ENCODE measurements at regions of chr4 and their contacts with region 1.

Region 1: DNA sequence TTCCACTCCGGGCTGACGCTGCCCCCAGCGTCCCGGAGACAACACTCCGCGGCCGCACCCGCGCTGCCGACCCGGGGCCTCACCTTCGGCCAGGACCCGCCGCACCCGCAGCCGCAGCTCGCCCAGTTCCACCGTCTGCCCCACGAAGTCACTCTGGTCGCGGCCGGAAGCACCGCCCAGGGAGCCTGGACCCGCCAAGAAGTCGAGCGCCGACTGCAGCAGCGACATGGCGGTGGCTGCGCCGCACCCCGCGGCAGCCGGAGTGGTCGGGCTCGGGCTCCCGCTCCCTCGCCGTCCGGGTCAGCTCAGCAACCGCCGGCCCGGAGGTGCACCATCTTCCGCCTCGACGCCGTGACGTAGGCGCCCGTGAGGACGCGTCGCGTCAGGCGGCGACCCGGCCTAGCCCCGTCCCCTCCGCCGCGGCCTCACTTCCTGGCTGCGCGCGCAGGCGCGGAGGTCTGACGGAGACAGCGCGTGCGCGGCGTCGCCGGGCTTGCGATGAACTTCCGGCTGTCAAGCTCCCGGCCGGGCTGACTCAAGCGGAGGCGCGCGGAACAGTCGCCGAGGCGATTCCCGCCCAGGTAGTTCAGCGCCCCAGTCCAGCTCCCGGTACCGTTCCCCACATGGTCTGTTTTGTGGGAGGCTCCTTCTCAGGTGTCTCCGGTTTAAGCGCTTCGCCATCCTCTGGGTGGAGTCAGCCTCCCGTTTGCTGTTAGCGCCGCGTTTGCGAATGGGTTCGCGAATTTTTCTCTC is at the starts of genes GAK and TMEM175:
- DNase-seq: peak; percentile 93 to 99 (median 98)
- ATAC-seq: peak; percentile 95
- H3K4me3 ChIP-seq: peak within 1 kb of the TSS; percentile 83
- H3K4me3 Mint-ChIP-seq: peak within 1 kb of the TSS; percentile 89 to 99 (median 95)
- H3K27ac ChIP-seq: peak within 1 kb of the TSS; percentile 99
- H3K27ac Mint-ChIP-seq: peak within 1 kb of the TSS; percentile 92 to 97 (median 96)
- H3K4me1 ChIP-seq: peaks cover 24 to 35% of the 10 kb centered on the region in 2 donors
- H3K4me1 Mint-ChIP-seq: peaks cover 35 to 59% (median 48%) of the 10 kb centered on the region in 7 donors
- H3K27me3 ChIP-seq: no peaks in the 10 kb centered on the region
- H3K27me3 Mint-ChIP-seq: no peaks in the 10 kb centered on the region
- total RNA-seq, gene GAK: 167 to 206 (median 174) TPM
- total RNA-seq, gene TMEM175: 28.9 to 69.9 (median 64.9) TPM

Region 2: GRCh38 chr4:674172-675035 is 257.7 kb before region 1 on chr4 and contains the starts of genes ATP5ME and MYL5:
- CTCF ChIA-PET with region 1: no interaction called
- POLR2A ChIA-PET with region 1: no interaction called
- intact Hi-C with region 1: loop called (anchors 1 to 2 kb)
- DNase-seq: peak; percentile 97 to 100 (median 99)
- ATAC-seq: peak; percentile 96
- H3K4me3 ChIP-seq: peak within 1 kb of the TSS; percentile 88
- H3K4me3 Mint-ChIP-seq: peak within 1 kb of the TSS; percentile 84 to 92 (median 88)
- H3K27ac ChIP-seq: peak within 1 kb of the TSS; percentile 100
- H3K27ac Mint-ChIP-seq: peak within 1 kb of the TSS; percentile 80 to 91 (median 89)
- H3K4me1 ChIP-seq: peaks cover 7 to 16% of the 10 kb centered on the region in 2 donors
- H3K4me1 Mint-ChIP-seq: peaks cover 7 to 15% (median 8%) of the 10 kb centered on the region in 7 donors
- H3K27me3 ChIP-seq: no peaks in the 10 kb centered on the region
- H3K27me3 Mint-ChIP-seq: no peaks in the 10 kb centered on the region
- total RNA-seq, gene ATP5ME: 115 to 183 (median 123) TPM
- total RNA-seq, gene MYL5: 19.9 to 32.7 (median 23.8) TPM

Region 3: GRCh38 chr4:876780-877179 is 55.4 kb before region 1 on chr4:
- CTCF ChIA-PET with region 1: no interaction called
- POLR2A ChIA-PET with region 1: no interaction called
- intact Hi-C with region 1: loop called (anchors 1 kb)
- DNase-seq: no peak
- ATAC-seq: no peak
- H3K4me3 ChIP-seq: no peak overlapping the region
- H3K4me3 Mint-ChIP-seq: peak overlapping the region in 1 of 10 donors; percentile 34
- H3K27ac ChIP-seq: no peak overlapping the region
- H3K27ac Mint-ChIP-seq: peak overlapping the region in 3 of 9 donors; percentile 28 to 76 (median 38)
- H3K4me1 ChIP-seq: peaks cover 15 to 21% of the 10 kb centered on the region in 2 donors
- H3K4me1 Mint-ChIP-seq: peaks cover 22 to 35% (median 28%) of the 10 kb centered on the region in 7 donors
- H3K27me3 ChIP-seq: no peaks in the 10 kb centered on the region
- H3K27me3 Mint-ChIP-seq: no peaks in the 10 kb centered on the region

Region 4: DNA sequence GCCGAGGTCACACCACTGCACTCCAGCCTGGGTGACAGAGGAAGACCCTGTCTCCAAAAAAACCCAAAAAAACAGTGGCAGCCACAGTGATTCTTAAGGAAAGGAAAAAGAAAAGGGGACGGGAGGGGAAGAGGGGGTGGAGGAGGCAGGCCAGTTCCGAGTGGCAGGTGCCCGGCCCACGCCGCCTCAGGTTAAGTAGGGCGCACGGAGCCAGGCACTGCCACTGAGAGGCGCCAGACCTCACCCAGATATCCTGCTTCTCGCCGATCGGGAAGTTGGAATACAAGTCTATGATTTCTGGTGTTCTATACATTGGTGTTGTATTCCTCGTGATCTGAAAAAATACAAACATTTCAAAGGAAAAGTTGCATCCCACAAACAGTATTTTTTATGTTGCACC is 35.9 kb before region 1 on chr4:
- CTCF ChIA-PET with region 1: no interaction called
- POLR2A ChIA-PET with region 1: no interaction called
- intact Hi-C with region 1: no loop called
- DNase-seq: no peak
- ATAC-seq: no peak
- H3K4me3 ChIP-seq: no peak overlapping the region
- H3K4me3 Mint-ChIP-seq: no peak overlapping the region
- H3K27ac ChIP-seq: no peak overlapping the region
- H3K27ac Mint-ChIP-seq: no peak overlapping the region
- H3K4me1 ChIP-seq: no peaks in the 10 kb centered on the region
- H3K4me1 Mint-ChIP-seq: peaks cover 0 to 8% (median 0%) of the 10 kb centered on the region in 7 donors
- H3K27me3 ChIP-seq: no peaks in the 10 kb centered on the region
- H3K27me3 Mint-ChIP-seq: no peaks in the 10 kb centered on the region

Region 5: GRCh38 chr4:986879-987623 is 54.9 kb after region 1 on chr4 and contains the start of gene IDUA:
- CTCF ChIA-PET with region 1: interaction called, 4 read pairs
- POLR2A ChIA-PET with region 1: interaction called, 14 read pairs
- intact Hi-C with region 1: loop called (anchors 1 kb)
- DNase-seq: peak; percentile 75 to 90 (median 84)
- ATAC-seq: peak; percentile 93
- H3K4me3 ChIP-seq: peak within 1 kb of the TSS; percentile 82
- H3K4me3 Mint-ChIP-seq: peak within 1 kb of the TSS; percentile 87 to 95 (median 92)
- H3K27ac ChIP-seq: peak within 1 kb of the TSS; percentile 78
- H3K27ac Mint-ChIP-seq: peak within 1 kb of the TSS; percentile 76 to 90 (median 85)
- H3K4me1 ChIP-seq: peaks cover 19 to 21% of the 10 kb centered on the region in 2 donors
- H3K4me1 Mint-ChIP-seq: peaks cover 11 to 34% (median 22%) of the 10 kb centered on the region in 7 donors
- H3K27me3 ChIP-seq: no peaks in the 10 kb centered on the region
- H3K27me3 Mint-ChIP-seq: no peaks in the 10 kb centered on the region
- total RNA-seq, gene IDUA: 42.3 to 72.4 (median 65.8) TPM

Region 6: GRCh38 chr4:1041147-1041935 is 109.2 kb after region 1 on chr4:
- CTCF ChIA-PET with region 1: no interaction called
- POLR2A ChIA-PET with region 1: no interaction called
- intact Hi-C with region 1: no loop called
- DNase-seq: no peak
- ATAC-seq: no peak
- H3K4me3 ChIP-seq: no peak overlapping the region
- H3K4me3 Mint-ChIP-seq: peak overlapping the region in 6 of 10 donors; percentile 27 to 71 (median 39)
- H3K27ac ChIP-seq: no peak overlapping the region
- H3K27ac Mint-ChIP-seq: no peak overlapping the region
- H3K4me1 ChIP-seq: no peaks in the 10 kb centered on the region
- H3K4me1 Mint-ChIP-seq: peaks cover 0 to 4% (median 0%) of the 10 kb centered on the region in 7 donors
- H3K27me3 ChIP-seq: no peaks in the 10 kb centered on the region
- H3K27me3 Mint-ChIP-seq: peaks cover 0 to 24% (median 9%) of the 10 kb centered on the region in 5 donors

Region 7: DNA sequence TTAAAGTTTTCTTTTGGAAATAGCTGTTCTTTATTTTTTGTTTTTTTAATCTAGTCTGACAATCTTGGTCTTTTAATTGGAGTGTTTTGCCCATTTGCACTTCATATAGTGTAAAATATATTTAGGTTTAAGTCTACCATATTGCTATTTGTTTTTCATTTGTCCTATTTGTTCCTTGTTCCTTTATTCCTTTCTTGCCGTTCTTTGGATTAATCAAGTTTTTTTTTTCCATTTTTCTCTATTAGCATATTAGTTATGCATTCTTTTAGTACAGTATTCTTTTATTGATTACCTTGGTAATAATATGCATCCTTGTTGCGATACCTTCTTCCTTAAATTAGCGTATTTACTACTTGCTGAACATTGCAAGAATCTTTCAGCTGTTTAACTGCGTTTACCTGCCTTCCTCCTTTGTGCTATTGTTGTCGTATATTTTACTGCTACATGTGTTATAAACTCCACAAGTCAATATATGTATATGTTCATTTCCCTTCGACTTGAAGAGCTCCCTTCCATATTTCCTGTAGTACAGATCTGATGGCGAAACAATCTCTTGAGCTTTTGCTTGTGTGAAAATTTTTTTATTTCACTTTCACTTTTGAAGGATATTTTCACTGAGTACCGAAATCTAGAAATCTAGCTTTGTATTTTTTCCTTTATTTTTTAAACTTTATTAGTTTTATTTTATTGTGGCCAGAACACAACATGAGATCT is 205.1 kb after region 1 on chr4:
- CTCF ChIA-PET with region 1: no interaction called
- POLR2A ChIA-PET with region 1: no interaction called
- intact Hi-C with region 1: no loop called
- DNase-seq: peak in 4 of 9 donors; percentile 14 to 33 (median 24)
- ATAC-seq: peak; percentile 31
- H3K4me3 ChIP-seq: peak overlapping the region; percentile 41
- H3K4me3 Mint-ChIP-seq: peak overlapping the region; percentile 42 to 88 (median 80)
- H3K27ac ChIP-seq: peak overlapping the region; percentile 41
- H3K27ac Mint-ChIP-seq: peak overlapping the region in 8 of 9 donors; percentile 7 to 73 (median 53)
- H3K4me1 ChIP-seq: peaks cover 0 to 13% of the 10 kb centered on the region in 2 donors
- H3K4me1 Mint-ChIP-seq: peaks cover 7 to 29% (median 21%) of the 10 kb centered on the region in 7 donors
- H3K27me3 ChIP-seq: no peaks in the 10 kb centered on the region
- H3K27me3 Mint-ChIP-seq: peaks cover 0 to 30% (median 0%) of the 10 kb centered on the region in 5 donors

Region 8: DNA sequence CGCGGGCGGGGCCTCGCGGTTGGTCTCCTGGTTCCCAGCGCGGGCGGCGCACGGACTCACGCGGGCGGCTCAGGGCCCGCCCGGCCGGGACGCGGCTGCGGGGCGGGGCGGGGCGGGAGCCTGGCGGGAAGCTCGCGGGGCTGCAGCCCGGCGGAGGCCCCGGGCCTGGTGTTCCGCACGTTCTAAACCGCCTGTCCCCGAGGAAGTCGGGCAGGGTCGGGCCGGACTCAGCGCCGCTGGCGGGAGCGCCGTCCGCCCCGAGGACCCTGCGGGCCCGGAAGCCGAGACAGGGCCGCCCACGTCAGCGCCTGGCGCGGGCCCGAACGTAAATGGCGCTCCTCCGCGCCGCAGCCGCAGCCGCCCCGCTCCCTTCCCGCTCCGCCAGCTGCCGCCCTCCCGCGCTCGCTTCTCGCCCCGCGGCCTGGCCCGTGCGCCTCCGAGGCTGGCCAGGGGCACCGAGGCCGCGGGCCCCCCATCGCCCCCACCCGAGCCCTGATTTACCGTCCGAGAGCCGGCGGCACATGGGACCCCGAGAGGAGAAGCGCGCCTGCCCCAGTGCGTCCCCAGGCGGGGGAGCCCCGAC is 317.1 kb after region 1 on chr4:
- CTCF ChIA-PET with region 1: no interaction called
- POLR2A ChIA-PET with region 1: interaction called, 3 read pairs
- intact Hi-C with region 1: loop called in 1 of 2 experiments (anchors 5 kb)
- DNase-seq: peak; percentile 79 to 92 (median 90)
- ATAC-seq: peak; percentile 80
- H3K4me3 ChIP-seq: peak overlapping the region; percentile 82
- H3K4me3 Mint-ChIP-seq: peak overlapping the region; percentile 80 to 93 (median 88)
- H3K27ac ChIP-seq: peak overlapping the region; percentile 97
- H3K27ac Mint-ChIP-seq: peak overlapping the region; percentile 90 to 96 (median 94)
- H3K4me1 ChIP-seq: peaks cover 51 to 66% of the 10 kb centered on the region in 2 donors
- H3K4me1 Mint-ChIP-seq: peaks cover 50 to 74% (median 65%) of the 10 kb centered on the region in 7 donors
- H3K27me3 ChIP-seq: no peaks in the 10 kb centered on the region
- H3K27me3 Mint-ChIP-seq: no peaks in the 10 kb centered on the region

Region 9: GRCh38 chr4:2515830-2516550 is 1583.9 kb after region 1 on chr4:
- CTCF ChIA-PET with region 1: no interaction called
- POLR2A ChIA-PET with region 1: no interaction called
- intact Hi-C with region 1: no loop called
- DNase-seq: no peak
- ATAC-seq: no peak
- H3K4me3 ChIP-seq: no peak overlapping the region
- H3K4me3 Mint-ChIP-seq: no peak overlapping the region
- H3K27ac ChIP-seq: no peak overlapping the region
- H3K27ac Mint-ChIP-seq: peak overlapping the region in 5 of 9 donors; percentile 23 to 57 (median 47)
- H3K4me1 ChIP-seq: peaks cover 0 to under 1% of the 10 kb centered on the region in 2 donors
- H3K4me1 Mint-ChIP-seq: peaks cover 0 to 5% (median 0%) of the 10 kb centered on the region in 7 donors
- H3K27me3 ChIP-seq: no peaks in the 10 kb centered on the region
- H3K27me3 Mint-ChIP-seq: no peaks in the 10 kb centered on the region